Right ventricle myocardium inferior (tissue), 1 donor: ENCODE measurements at regions of chr1 and their contacts with region 1.

Region 1: GRCh38 chr1:164786980-164787833 is 228.2 kb downstream of the PBX1 start:
- DNase-seq: peak; percentile 81
- ATAC-seq: peak; percentile 82

Region 2: GRCh38 chr1:164310166-164310565 is 477.0 kb before region 1 on chr1:
- intact Hi-C with region 1: loop called (anchors 10 kb)
- DNase-seq: no peak
- ATAC-seq: no peak

Region 3: DNA sequence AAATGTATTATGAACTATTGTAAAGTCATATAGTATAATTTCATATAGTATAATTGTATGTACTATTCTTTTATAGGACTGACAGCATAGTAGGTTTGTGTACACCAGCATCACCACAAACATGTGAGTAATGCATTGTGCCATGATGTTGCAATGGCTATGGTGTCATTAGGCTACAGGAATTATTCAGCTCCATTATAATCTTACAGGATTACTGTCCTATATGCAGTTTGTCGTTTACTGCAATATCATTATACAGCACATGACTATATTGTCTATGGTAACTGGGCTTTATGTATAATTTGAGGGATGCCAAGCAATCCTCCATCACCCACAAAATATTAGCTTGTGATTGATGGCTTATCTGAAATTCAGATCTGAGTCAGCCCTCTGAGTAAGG is 282.5 kb before region 1 on chr1:
- intact Hi-C with region 1: loop called (anchors 5 kb)
- DNase-seq: no peak
- ATAC-seq: no peak

Region 4: DNA sequence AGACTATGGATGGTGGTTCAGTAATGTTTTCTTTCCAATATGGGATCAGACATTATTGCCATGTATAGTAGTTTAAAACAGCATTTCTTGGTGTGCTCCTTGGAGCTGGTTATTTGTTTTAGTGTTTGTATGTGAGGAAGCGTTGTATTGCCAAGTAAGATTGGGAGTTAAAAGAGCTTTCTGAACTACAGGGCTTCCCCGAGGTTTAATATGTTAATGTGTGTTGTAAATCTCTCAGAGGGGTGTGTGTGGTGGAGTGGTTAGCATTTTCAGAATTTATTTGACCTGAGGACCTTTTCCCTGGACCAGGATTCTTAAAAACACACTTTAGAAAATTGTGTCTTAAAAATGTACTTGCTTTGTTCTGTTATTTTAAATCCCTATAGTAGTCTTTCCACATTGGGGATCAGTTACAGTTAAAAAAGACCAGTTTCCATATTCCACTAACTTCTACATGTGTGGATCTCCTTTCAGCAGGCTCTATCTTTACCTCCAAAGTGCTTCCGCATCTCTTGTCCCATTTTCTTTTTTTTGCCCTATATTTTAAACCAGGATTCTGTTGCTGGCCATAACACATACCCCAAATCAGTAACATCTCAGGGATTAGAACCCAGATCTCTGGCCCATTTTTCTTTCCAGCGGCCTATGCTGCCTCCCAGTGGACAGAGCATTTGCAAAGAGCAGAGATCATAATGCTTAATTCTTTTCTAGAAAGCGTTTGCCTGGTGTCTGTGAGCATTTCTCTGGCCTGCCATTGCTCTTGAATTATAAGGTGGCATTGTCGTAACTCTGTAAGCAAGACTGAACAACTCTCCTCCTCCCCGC is 169.6 kb before region 1 on chr1:
- intact Hi-C with region 1: loop called (anchors 5 kb)
- DNase-seq: no peak
- ATAC-seq: no peak

Region 5: DNA sequence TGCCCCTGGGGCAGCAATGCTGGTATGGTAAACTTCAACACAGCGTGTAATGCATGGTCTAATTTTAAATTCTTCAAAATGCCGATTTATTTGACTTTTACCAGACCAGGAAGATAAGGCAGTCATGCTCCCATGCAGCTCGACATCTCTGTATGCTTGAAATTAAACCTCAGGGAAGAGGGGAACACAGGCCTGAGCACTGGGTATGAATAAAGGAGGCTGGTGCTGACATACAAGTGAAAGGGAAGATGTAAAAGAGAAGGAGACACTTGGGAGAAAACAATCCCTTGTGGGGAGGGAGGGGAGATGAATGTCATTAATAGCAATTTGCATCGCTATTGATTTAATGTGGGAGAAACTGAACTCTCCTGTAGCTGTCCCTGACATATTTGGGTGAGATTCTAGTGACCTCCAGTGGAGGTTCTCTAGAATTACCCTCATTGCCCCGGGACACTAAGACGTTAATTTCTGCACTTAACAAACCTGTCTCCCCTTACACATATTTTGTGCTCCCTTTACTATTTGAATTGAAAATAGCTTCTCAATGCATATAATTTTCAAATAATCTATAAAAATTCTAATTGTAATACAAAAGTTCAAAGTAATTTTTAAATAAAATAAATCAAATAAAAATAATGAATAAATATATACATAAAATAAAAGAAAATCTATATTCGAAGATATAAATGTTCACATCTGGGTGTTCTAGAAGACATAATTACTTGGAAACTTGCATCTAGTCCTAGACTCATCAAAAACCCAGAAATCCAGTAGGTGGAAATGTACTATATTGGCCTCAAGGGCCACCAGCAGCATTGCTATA is 286.2 kb after region 1 on chr1:
- intact Hi-C with region 1: loop called (anchors 5 kb)
- DNase-seq: no peak
- ATAC-seq: peak; percentile 48